PC-9 (cell line): ENCODE measurements at regions of chr5 and their contacts with region 1.

Region 1: DNA sequence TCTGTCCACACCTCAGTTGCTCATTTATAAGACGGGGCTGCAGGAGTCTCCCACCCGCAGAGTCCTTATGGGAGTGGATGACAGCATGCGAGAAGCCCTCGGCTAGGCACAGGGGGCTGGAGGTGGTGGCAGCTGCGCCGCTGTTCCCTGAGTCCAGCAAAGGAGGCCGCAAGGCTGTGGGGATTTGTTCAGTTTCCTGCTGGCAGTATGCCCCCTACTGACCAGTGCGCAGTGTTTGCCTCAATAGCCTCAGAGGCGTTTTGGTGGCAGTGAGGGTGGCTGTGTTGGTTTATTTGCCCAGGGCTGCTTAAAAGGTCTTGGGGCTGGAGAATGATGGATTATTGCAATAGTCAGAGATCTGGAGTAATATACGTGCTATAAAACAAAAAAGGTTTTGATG is 176.3 kb upstream of the OTULINL start:
- DNase-seq: peak in 1 of 2 experiments; percentile 73
- H3K4me3 ChIP-seq: no peak overlapping the region
- H3K27ac ChIP-seq: no peak overlapping the region
- H3K4me1 ChIP-seq: no peaks in the 10 kb centered on the region
- H3K27me3 ChIP-seq: no peaks in the 10 kb centered on the region
- CTCF ChIP-seq: 0 out of 2 replicates have a peak, but pooled peaks have one; percentile 34

Region 2: DNA sequence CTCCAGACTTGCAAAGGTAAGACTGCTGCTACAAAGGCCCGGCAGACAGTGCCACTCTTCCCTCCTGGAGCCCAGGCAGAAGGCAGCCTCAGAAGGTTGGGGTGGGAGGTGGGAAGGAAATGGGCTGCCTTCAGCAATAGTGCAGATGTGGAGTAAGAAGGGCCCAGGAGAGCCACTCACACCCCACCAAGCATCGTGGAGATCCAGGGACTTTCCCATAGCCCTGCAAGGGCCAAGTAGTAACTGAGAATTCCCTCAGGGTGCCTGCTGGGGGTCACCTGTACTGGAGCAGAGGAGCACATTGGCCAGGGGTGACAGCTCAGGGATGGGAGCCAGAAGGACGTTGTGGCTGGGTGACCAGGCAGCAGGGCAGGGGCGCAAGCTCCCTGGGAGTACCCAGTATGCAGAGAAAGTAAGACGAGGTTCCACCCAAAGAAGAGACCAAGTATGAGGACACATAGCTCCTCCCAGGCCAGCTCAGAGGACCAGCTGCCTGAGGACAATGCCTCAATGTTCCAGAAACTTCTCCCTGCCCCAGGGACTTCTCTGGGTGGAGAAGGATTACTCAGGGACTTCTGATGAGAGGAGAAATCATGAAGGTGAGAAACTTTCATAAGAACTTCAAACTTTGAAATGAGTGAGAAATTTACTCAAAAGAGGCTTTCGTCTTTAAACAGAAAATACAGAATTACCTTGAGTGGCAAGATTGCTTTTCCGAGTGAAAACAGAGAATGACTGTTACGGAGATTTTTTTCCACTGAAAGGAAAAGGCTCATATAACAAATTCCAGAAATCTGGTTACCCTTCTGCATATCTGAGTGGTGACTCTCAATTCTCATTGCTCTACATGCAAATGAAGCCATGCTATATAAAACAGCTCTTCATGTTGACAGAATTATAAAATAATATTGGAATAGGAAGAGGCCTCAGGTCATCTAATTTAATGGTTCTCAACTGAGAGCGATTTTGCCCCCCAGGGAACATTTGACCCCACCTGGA is 350.0 kb before region 1 on chr5:
- CTCF ChIA-PET with region 1: no interaction called
- POLR2A ChIA-PET with region 1: no interaction called
- intact Hi-C with region 1: no loop called
- DNase-seq: no peak
- H3K4me3 ChIP-seq: no peak overlapping the region
- H3K27ac ChIP-seq: no peak overlapping the region
- H3K4me1 ChIP-seq: no peaks in the 10 kb centered on the region
- H3K27me3 ChIP-seq: no peaks in the 10 kb centered on the region
- CTCF ChIP-seq: no peak

Region 3: GRCh38 chr5:14428302-14429081 is 23.2 kb after region 1 on chr5:
- CTCF ChIA-PET with region 1: no interaction called
- POLR2A ChIA-PET with region 1: interaction called, 11 read pairs
- intact Hi-C with region 1: no loop called
- DNase-seq: no peak
- H3K4me3 ChIP-seq: no peak overlapping the region
- H3K27ac ChIP-seq: no peak overlapping the region
- H3K4me1 ChIP-seq: no peaks in the 10 kb centered on the region
- H3K27me3 ChIP-seq: no peaks in the 10 kb centered on the region
- CTCF ChIP-seq: no peak

Region 4: GRCh38 chr5:14435481-14435880 is 30.2 kb after region 1 on chr5:
- CTCF ChIA-PET with region 1: no interaction called
- POLR2A ChIA-PET with region 1: interaction called, 11 read pairs
- intact Hi-C with region 1: loop called (anchors 2 kb)
- DNase-seq: peak in 1 of 2 experiments; percentile 84
- H3K4me3 ChIP-seq: no peak overlapping the region
- H3K27ac ChIP-seq: no peak overlapping the region
- H3K4me1 ChIP-seq: peaks cover 18% of the 10 kb centered on the region
- H3K27me3 ChIP-seq: no peaks in the 10 kb centered on the region
- CTCF ChIP-seq: no peak

Region 5: GRCh38 chr5:14900731-14901461 is 495.6 kb after region 1 on chr5:
- CTCF ChIA-PET with region 1: no interaction called
- POLR2A ChIA-PET with region 1: no interaction called
- intact Hi-C with region 1: no loop called
- DNase-seq: peak in 1 of 2 experiments; percentile 31
- H3K4me3 ChIP-seq: no peak overlapping the region
- H3K27ac ChIP-seq: no peak overlapping the region
- H3K4me1 ChIP-seq: no peaks in the 10 kb centered on the region
- H3K27me3 ChIP-seq: peaks cover 10% of the 10 kb centered on the region
- CTCF ChIP-seq: no peak